Left cardiac atrium (tissue), 4 donors: ENCODE measurements at regions of chr12 and their contacts with region 1.

Region 1: DNA sequence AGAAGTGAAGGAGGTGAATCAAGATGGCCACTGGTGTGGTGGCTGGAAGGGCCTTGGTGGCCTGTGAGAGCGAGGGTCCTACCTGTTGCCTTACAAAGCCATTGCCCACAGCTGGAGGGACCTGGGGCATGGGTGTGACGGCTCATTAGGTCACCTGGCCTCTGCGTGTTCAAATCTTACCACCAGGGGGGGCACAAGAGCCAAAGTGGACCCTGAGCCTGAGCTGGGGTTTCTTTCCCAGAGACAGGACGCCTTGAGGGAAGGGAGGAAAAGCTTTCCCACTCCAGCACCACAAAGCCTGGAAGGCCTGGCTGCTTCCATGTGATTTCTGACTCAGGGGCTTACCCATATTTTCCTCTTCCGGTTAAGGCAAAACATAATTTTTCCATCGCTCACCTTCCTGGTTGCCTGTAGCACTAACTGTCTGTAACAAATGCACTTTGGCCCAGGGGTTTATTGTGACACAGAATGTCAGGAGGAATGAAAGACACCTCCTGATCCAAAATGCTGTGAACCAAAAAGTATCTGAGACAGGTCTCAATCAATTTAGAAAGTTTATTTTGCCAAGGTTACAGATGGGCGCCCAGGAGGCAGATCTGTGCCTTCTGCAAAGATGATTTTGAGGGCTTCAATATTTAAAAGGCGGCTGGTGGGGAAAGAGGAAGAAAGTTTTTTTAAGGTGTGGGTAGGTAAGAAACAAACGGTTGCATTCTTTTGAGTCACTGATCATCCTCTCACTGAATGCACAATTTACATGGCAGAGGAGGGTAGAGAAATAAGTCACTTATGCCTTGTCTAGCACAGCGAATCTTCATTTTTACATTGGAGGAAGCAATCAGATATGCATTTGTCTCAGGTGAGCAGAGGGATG is 4.3 kb upstream of the CD9 start:
- DNase-seq: peak; percentile 86
- ATAC-seq: peak; percentile 66 to 79

Region 2: GRCh38 chr12:6062757-6063735 is 132.9 kb before region 1 on chr12:
- intact Hi-C with region 1: loop called (anchors 5 kb)
- DNase-seq: no peak
- ATAC-seq: peak; percentile 56 to 61

Region 3: GRCh38 chr12:6140651-6141447 is 55.1 kb before region 1 on chr12:
- intact Hi-C with region 1: no loop called
- DNase-seq: peak; percentile 52
- ATAC-seq: peak; percentile 64 to 72

Region 4: GRCh38 chr12:6267139-6267721 is 71.3 kb after region 1 on chr12:
- intact Hi-C with region 1: no loop called
- DNase-seq: no peak
- ATAC-seq: peak in 1 of 2 donors; percentile 29

Region 5: DNA sequence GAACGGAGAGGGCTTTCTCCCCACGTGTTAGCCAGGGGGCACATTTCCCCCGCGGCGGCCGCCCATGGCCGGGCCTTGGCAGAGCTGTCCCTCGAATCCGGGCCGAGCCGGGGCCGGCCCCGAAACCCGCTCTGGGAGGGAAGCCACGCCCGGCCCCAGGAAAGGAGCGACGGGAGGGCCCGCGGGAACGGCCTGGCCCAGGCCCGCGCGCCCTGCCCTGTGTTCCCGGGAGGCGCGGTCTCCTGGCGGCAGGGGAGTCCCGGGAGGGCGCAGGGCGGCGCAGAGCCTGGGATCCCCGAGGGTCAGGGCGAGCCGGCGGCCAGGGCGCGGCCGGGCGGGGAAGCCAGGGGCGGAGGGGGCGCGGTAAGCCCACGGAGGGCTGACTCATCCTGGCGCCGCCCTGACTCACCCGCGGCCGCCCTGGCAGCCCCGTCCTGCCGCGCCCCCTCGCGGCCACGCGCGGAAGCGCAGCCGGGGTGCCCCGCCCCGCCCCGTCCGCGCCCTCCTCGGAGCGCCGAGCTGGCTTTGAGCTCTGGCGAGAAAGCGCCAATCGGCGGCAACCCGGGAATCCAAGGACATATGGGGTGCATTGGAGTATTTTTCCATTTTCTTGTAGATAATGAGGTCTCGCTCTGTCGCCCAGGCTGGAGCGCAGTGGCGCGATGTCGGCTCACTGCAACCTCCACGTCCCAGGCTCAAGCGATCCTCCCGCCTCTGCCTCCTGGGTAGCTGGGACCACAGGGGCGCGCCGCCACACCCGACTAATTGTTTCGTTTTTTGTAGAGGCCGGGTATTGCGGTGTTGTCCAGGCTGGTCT is 82.7 kb after region 1 on chr12:
- intact Hi-C with region 1: loop called (anchors 2 kb)
- DNase-seq: peak; percentile 92
- ATAC-seq: peak; percentile 94 to 96

Region 6: DNA sequence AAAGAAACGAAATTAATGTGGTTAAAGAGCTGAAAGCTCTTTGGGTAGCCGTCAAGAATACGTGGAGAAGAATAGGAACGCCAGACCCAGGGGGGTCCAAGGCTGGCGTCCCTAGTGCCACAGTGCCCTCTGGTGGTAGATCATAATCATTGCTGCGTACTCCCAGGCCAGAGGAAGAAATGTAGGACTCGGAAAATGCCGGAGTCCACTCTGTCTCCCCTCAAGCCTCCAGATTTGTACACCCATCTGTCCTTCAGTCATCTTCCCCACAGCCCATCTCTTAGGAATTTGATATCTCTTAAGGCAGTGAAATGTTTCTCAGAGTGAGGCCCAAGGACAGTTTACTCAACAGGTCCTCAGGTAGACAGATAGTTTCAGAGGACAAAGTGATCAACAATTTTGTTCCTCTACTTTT is 89.2 kb after region 1 on chr12:
- intact Hi-C with region 1: loop called (anchors 2 kb)
- DNase-seq: no peak
- ATAC-seq: peak; percentile 77 to 95

Region 7: DNA sequence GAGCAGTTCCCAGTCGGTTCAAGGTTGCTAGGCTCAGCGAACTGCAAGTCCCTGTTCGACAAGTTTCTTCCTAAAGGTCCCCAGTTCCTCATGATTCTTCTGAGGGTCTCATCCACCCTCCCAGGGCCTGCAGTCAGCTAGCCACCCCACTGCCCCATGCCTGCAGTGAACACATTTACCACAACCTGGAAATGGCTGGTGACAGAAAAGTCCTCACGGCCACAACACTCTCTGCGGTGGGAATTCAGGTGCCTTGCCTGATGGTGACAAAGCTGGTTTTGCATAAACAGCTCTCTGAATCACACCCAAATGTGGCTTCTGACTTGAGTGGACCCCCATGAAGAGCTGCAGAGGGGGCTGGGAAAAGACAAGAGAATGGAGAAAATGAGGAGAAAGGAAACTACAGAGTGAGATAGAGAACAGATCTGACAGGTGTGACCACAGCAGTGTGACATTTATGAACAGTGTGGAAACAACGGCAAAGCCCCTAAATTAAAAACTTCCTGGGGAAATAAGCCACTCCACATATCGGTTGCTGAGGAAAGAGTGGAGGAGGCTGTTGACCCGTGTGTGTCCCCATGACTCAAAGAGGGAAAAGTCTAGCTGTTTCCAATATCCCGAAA is 247.6 kb after region 1 on chr12:
- intact Hi-C with region 1: no loop called
- DNase-seq: no peak
- ATAC-seq: no peak